Sigmoid colon (tissue), 7 donors: ENCODE measurements at regions of chr1 and their contacts with region 1.

Region 1: GRCh38 chr1:203026031-203026989 is at the start of gene PPFIA4:
- DNase-seq: peak; percentile 93
- H3K4me3 ChIP-seq: peak within 1 kb of the TSS; percentile 34 to 61 (median 50)
- H3K27ac ChIP-seq: peak within 1 kb of the TSS; percentile 54 to 75 (median 62)
- H3K4me1 ChIP-seq: peaks cover 0 to 31% (median 18%) of the 10 kb centered on the region in 4 donors
- H3K27me3 ChIP-seq: peaks cover 0 to 3% (median 0%) of the 10 kb centered on the region in 3 donors
- CTCF ChIP-seq: no peak
- EP300 ChIP-seq: no peak
- POLR2A ChIP-seq: no peak
- total RNA-seq, gene PPFIA4: 1.1 to 15.0 (median 2.8) TPM

Region 2: GRCh38 chr1:202968840-202969295 is 57.4 kb before region 1 on chr1:
- intact Hi-C with region 1: loop called (anchors 5 kb)
- DNase-seq: peak; percentile 74
- H3K4me3 ChIP-seq: no peak overlapping the region
- H3K27ac ChIP-seq: peak overlapping the region in 2 of 4 donors; percentile 95 to 96
- H3K4me1 ChIP-seq: peaks cover 0 to 29% (median 16%) of the 10 kb centered on the region in 4 donors
- H3K27me3 ChIP-seq: no peaks in the 10 kb centered on the region
- CTCF ChIP-seq: peak; percentile 31 to 52 (median 35)
- EP300 ChIP-seq: no peak
- POLR2A ChIP-seq: no peak